Right ventricle myocardium superior (tissue), 1 donor: ENCODE measurements at regions of chr3 and their contacts with region 1.

Region 1: GRCh38 chr3:107429320-107430181 is 52.3 kb downstream of the CCDC54 start:
- DNase-seq: peak; percentile 79
- ATAC-seq: peak; percentile 89

Region 2: GRCh38 chr3:107235928-107236315 is 193.6 kb before region 1 on chr3:
- intact Hi-C with region 1: loop called (anchors 10 kb)
- DNase-seq: no peak
- ATAC-seq: peak; percentile 76

Region 3: DNA sequence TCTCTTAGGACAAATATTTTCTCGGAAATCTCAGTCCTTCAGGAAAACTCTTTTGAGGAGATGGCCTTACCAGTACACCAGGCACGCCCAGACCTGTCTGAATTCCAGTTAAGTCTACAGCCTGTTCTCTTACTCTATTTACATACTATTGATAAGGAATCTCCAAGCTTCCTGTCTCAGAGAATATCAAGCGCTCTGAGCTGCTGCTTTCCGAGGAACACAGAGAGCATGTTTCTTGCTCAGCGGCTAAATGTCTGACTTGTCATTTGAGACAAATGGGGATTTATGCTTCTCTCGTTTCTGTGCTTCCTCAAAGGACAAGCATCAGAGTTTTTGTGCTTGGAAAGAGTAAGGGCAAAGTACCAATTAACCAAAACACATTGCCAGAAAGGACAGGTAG is 164.7 kb before region 1 on chr3:
- intact Hi-C with region 1: loop called (anchors 5 kb)
- DNase-seq: no peak
- ATAC-seq: peak; percentile 21

Region 4: DNA sequence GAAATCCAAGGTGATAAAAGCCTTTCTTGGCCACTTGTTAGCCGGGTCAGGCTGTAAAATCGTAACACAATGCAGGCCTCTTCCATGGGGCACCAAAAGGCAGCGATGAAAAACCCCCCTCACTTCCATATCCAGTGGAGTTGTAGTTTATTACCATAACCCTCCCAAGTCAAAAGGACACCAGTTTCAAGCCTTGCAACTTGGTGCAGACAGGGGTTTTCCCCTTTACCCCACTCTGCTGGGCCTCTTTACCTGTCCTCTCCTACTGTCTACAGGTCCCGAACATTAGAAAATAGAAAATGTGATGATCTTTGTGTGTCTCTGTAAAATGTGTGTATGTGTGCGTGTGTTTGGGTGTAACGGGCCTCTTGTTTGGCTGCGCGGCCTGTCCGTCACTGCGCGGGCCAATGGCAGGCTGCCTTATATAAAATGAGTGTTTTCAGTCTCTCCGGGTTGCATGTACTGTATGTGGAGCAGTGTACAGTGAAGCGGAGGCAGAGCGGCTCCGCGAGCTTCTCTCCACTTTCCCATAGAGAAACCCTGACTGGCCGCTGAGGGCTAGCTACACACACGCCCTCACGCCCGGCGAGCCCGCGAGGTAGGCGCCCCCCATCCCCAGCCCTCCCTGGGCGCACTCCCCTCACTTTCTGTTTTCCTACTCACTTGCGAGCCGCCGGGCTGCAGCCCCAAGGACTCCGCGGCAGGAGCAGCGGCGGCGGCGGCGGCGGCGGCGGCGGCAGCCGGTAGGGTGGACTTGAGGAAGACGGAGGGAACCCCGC is 93.1 kb after region 1 on chr3 and contains the start of gene BBX:
- intact Hi-C with region 1: loop called (anchors 5 kb)
- DNase-seq: peak; percentile 96
- ATAC-seq: peak; percentile 95
- total RNA-seq, gene BBX: 31.7 TPM